Left cardiac atrium (tissue), 4 donors: ENCODE measurements at regions of chr16 and their contacts with region 1.

Region 1: GRCh38 chr16:68229431-68230198 is 6.3 kb downstream of the ESRP2 start:
- DNase-seq: no peak
- ATAC-seq: peak; percentile 8 to 58

Region 2: DNA sequence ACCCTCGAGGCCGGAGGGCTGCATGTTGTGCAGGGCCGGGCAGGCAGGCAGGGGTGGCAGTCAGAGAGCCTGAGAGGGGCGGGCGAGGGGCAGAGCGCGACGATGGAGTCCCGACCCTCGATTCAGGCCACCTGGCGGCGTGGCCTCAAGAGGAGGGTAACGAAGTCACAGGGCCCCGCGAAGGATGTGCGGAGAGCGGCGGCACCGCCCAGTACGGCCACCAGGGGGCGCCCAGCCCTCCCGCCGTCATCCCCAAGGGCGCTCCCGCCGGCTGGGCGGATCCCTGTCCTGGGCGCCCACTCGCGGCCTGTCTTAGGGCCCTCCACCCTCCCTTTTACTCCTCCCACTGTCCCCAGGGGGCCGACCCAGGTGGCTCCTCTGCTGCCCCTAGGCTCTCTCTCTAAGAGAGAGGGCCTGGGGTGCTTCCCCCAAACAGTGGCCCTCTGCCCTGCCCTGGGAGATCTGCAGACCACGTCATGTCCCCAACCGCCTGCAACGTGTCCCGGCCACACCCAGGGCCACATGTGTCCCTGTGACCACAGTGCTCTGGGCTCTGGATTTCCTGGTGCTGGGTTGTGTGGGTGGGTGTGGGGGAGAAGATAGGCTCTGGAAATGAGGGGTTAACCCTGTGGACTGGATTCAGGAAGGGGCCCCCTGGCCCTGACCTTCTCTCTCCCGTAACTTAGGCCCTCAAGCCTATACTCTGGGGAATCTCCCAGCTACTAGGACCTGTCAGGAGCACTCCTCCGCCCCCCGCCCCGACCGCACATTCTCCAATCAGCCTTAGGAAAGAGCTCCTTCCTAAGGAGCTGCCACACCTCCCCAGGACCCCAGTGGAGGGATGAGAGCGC is 236.2 kb before region 1 on chr16:
- intact Hi-C with region 1: loop called in 1 of 2 experiments (anchors 5 kb)
- DNase-seq: peak; percentile 88
- ATAC-seq: peak; percentile 94 to 97

Region 3: GRCh38 chr16:68093816-68094613 is 135.6 kb before region 1 on chr16:
- intact Hi-C with region 1: loop called (anchors 5 kb)
- DNase-seq: no peak
- ATAC-seq: peak; percentile 41 to 60